ENCODE measurements at regions of chr10 and their contacts with region 1.

Region 1: GRCh38 chr10:100338434-100339036 is 8.5 kb upstream of the SCD start:
- DNase-seq: peak; percentile 75
- ATAC-seq: peak; percentile 58 to 78

Region 2: DNA sequence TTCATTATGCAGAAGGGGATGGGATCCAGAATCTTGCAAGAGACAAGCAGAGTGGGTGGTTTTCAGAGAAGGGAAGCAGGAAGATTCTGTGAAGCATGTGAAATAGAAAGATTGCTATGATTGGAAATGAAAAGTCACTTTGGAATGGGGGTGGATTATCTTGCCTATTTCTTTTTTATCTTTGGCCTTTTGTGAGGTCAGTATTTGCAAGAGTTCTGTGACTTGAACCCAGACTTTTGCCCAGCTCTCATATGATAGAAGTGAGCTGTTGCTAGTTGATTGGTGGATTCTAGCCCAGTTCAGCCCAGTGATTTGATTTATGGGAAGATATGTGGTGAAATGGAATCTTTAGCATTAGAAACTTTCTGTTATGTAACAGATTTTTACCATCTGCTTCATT is 662.1 kb before region 1 on chr10:
- intact Hi-C with region 1: no loop called
- DNase-seq: no peak
- ATAC-seq: no peak

Region 3: GRCh38 chr10:100380400-100380799 is 41.9 kb after region 1 on chr10:
- intact Hi-C with region 1: loop called in 1 of 2 experiments (anchors 2 kb)
- DNase-seq: no peak
- ATAC-seq: no peak

Region 4: GRCh38 chr10:100433253-100434240 is 95.0 kb after region 1 on chr10:
- intact Hi-C with region 1: loop called (anchors 1 to 2 kb)
- DNase-seq: peak; percentile 91
- ATAC-seq: peak; percentile 92 to 96

Region 5: DNA sequence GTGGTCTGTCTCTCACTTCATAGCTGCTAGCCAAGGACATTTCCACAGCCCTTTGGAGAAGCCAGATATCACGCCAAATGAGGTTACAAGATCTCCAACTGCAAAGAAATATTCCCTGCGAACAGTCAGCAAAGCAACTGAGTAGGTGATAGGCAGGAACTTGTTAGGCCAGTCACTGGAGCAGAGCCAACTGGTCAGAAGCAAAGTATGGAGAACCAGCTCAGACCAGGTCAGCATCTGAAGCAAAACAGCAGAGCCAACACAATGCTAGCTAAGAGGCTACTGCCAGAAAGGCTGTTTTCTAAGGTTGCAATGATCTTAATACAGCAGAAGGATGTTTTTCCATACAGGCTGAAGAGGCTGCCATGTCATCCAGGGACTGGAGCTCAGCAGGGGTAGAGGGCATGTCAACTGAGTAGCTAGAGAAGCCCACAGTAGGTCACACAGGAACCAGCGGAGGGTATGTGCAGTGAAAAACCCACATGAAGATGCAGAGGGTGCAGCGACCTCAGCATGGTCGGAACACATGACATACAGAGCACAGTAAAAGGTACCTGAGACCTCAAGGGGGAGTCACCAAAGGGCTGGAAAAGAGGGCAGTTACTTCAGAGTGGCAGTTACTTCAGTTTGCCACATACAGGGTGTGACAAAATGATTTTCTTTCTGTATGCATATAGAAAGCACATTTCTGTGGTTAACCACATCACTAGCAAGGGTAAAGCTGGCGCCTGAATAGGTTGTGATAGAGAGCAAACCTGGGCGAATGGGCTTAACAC is 172.2 kb after region 1 on chr10:
- intact Hi-C with region 1: loop called (anchors 5 kb)
- DNase-seq: no peak
- ATAC-seq: peak; percentile 42 to 64

Region 6: DNA sequence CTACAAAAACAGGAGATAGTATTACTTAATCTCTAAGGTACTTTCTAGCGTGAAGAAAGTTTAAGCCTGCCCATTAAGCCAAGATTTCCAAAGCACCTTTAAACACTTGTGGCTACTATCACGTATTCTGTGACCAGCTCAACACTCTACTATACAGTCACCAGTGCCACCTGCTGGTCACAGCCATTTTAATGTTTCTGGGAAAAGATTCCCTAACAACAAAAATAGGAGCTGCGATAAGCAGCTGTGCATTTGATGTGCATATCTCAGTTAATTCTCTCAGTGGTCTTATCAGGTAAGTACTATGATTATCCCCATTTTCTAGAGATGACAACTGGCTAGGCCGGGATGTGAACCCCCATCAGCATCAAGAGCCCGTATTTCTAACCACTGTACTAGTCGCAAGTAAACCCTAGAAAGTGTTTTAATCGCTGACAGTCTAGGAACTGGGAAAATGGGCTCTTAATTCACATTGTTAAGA is 180.3 kb after region 1 on chr10:
- intact Hi-C with region 1: loop called (anchors 5 kb)
- DNase-seq: peak; percentile 69
- ATAC-seq: peak; percentile 61 to 73

Region 7: DNA sequence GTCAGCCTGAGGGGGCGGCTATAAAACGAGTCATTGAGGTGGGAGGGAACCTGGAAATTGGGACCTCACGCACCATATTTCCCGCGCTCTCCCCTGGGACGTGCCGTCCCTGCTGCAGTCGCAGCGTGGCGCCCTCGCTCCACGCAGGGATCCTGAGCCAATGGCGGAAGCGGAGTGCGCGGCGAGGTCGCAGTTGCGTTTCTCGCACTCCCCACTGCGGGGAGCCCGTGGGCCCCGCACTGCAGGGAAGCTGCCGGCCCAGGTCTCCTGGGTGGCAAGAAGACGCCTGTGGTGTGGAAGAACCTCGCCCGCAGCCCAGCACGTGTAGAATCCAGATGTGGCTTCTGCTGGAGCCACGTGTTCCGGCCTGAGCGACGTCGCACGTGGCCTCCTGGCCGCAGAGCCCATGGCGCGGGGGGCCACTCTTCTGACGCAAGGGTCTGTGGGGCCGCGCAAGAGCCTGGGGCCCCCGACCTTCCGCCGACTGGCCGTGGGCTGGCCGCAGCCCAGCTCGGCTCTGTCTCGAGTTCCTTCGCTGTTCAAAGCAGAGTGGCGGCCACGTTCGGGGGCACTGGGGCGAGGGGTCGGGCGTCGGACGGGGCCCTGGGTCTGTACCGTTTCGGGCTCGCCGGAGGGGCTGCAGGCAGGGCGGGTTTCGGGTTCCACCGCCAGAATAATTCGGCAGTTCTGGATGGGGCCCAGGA is 223.6 kb after region 1 on chr10:
- intact Hi-C with region 1: no loop called
- DNase-seq: peak; percentile 67
- ATAC-seq: peak; percentile 78 to 80

Region 8: GRCh38 chr10:100878291-100878910 is 539.9 kb after region 1 on chr10:
- intact Hi-C with region 1: loop called in 1 of 2 experiments (anchors 10 kb)
- DNase-seq: peak; percentile 47
- ATAC-seq: peak; percentile 81 to 82

Measured in left cardiac atrium (tissue), 4 donors.